GM12878 (cell line): ENCODE measurements at regions of chr22 and their contacts with region 1.

Region 1: GRCh38 chr22:19178656-19179496 is at the start of gene SLC25A1:
- DNase-seq: peak; percentile 39
- ATAC-seq: peak; percentile 88
- H3K4me3 ChIP-seq: peak within 1 kb of the TSS; percentile 76
- H3K27ac ChIP-seq: peak within 1 kb of the TSS; percentile 74
- H3K4me1 ChIP-seq: peaks cover 22% of the 10 kb centered on the region
- H3K27me3 ChIP-seq: peaks cover 0 to 1% of the 10 kb centered on the region in 2 experiments; a peak in 1 of 4 replicates
- CTCF ChIP-seq: no peak
- EP300 ChIP-seq: no peak
- POLR2A ChIP-seq: peak; percentile 59
- RAD21 ChIP-seq: no peak
- polyA plus RNA-seq, gene SLC25A1: 2.3 to 7.8 TPM

Region 2: GRCh38 chr22:18929459-18929858 is 249.4 kb before region 1 on chr22:
- CTCF ChIA-PET with region 1: no interaction called
- POLR2A ChIA-PET with region 1: no interaction called
- RAD21 ChIA-PET with region 1: no interaction called
- SMC1A ChIA-PET with region 1: no interaction called
- in situ Hi-C with region 1: no loop called
- intact Hi-C with region 1: no loop called
- DNase-seq: no peak
- ATAC-seq: no peak
- H3K4me3 ChIP-seq: no peak overlapping the region
- H3K27ac ChIP-seq: no peak overlapping the region
- H3K4me1 ChIP-seq: no peaks in the 10 kb centered on the region
- H3K27me3 ChIP-seq: no peaks in the 10 kb centered on the region
- CTCF ChIP-seq: no peak
- EP300 ChIP-seq: no peak
- POLR2A ChIP-seq: no peak
- RAD21 ChIP-seq: no peak

Region 3: GRCh38 chr22:19143967-19144400 is 34.9 kb before region 1 on chr22:
- CTCF ChIA-PET with region 1: interaction called, 24 read pairs
- POLR2A ChIA-PET with region 1: interaction called, 3 read pairs
- RAD21 ChIA-PET with region 1: interaction called, 6 read pairs
- SMC1A ChIA-PET with region 1: interaction called, 14 read pairs
- in situ Hi-C with region 1: no loop called
- intact Hi-C with region 1: loop called (anchors 2 kb)
- DNase-seq: no peak
- ATAC-seq: peak; percentile 63
- H3K4me3 ChIP-seq: peak overlapping the region; percentile 100
- H3K27ac ChIP-seq: peak overlapping the region; percentile 72
- H3K4me1 ChIP-seq: peaks cover 4% of the 10 kb centered on the region
- H3K27me3 ChIP-seq: peaks cover 0 to 8% of the 10 kb centered on the region in 2 experiments; a peak in 3 of 4 replicates
- CTCF ChIP-seq: no peak
- EP300 ChIP-seq: no peak
- POLR2A ChIP-seq: no peak
- RAD21 ChIP-seq: no peak

Region 4: DNA sequence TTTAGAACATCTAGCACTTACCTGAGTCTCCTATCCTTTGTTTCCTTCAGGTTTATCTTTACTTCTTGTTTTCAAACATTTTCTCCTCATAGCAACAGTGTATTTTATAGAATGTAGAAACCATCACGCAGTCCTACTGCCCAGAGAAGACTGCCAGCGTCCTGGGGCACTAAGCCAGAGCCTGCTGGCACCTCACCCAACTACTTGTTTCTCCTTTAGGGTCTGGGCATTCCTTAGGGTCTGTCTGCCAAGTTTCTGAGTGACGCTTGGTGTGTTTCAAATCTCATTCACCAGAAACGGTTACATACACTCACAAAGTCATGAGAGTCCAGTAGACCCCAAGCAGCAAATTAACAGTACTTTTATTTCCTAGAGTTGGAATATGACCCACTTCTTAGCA is 49.3 kb after region 1 on chr22:
- CTCF ChIA-PET with region 1: no interaction called
- POLR2A ChIA-PET with region 1: no interaction called
- RAD21 ChIA-PET with region 1: no interaction called
- SMC1A ChIA-PET with region 1: no interaction called
- in situ Hi-C with region 1: no loop called
- intact Hi-C with region 1: no loop called
- DNase-seq: no peak
- ATAC-seq: no peak
- H3K4me3 ChIP-seq: no peak overlapping the region
- H3K27ac ChIP-seq: no peak overlapping the region
- H3K4me1 ChIP-seq: no peaks in the 10 kb centered on the region
- H3K27me3 ChIP-seq: peaks cover 1 to 2% of the 10 kb centered on the region in 2 experiments; a peak in 2 of 4 replicates
- CTCF ChIP-seq: no peak
- EP300 ChIP-seq: no peak
- POLR2A ChIP-seq: no peak
- RAD21 ChIP-seq: no peak

Region 5: GRCh38 chr22:19321757-19322156 is 142.9 kb after region 1 on chr22:
- CTCF ChIA-PET with region 1: no interaction called
- POLR2A ChIA-PET with region 1: no interaction called
- RAD21 ChIA-PET with region 1: no interaction called
- SMC1A ChIA-PET with region 1: no interaction called
- in situ Hi-C with region 1: no loop called
- intact Hi-C with region 1: no loop called
- DNase-seq: no peak
- ATAC-seq: no peak
- H3K4me3 ChIP-seq: no peak overlapping the region
- H3K27ac ChIP-seq: no peak overlapping the region
- H3K4me1 ChIP-seq: no peaks in the 10 kb centered on the region
- H3K27me3 ChIP-seq: no peaks in the 10 kb centered on the region
- CTCF ChIP-seq: no peak
- EP300 ChIP-seq: no peak
- POLR2A ChIP-seq: no peak
- RAD21 ChIP-seq: no peak

Region 6: DNA sequence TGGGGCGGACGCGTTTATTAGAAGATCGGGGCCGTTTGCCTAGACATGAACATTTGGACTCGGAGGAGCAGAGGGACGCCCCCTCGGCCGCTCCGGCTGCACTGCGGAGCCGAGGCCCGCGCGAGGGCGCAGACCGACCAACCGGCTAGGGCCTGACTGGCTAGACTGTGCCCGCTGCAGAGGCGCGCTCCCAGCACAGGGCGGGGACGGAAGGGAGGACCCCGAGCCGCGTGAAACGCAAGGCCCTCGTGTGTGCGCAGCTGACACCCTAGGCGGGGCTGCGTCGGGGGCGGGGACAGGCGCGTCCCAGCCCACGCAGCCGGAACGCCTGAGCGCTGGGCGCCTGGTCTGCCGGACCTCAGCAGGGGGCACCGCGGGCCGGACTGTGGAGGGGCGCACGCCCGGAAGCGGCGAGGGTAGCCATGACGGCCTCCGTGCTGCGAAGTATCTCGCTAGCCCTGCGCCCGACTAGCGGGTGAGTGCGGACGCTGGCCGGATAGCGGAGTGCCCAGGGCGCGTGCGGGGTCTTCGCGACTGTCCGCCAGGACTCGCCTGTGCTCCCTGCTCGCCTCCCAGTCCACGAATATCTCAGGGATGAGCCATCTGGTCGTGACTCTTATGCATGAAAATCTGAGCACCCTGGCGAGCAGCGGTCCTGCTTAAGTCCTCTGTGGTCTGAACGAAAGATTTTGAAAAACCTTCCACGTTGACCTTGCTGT is 253.4 kb after region 1 on chr22 and contains the start of gene MRPL40:
- CTCF ChIA-PET with region 1: no interaction called
- POLR2A ChIA-PET with region 1: no interaction called
- RAD21 ChIA-PET with region 1: interaction called, 4 read pairs
- SMC1A ChIA-PET with region 1: no interaction called
- in situ Hi-C with region 1: no loop called
- intact Hi-C with region 1: loop called (anchors 5 kb)
- DNase-seq: peak; percentile 76
- ATAC-seq: peak; percentile 93
- H3K4me3 ChIP-seq: peak within 1 kb of the TSS; percentile 94
- H3K27ac ChIP-seq: peak within 1 kb of the TSS; percentile 93
- H3K4me1 ChIP-seq: no peaks in the 10 kb centered on the region
- H3K27me3 ChIP-seq: no peaks in the 10 kb centered on the region
- CTCF ChIP-seq: 0 out of 6 replicates have a peak, but pooled peaks of 1 of the 3 experiments have one; percentile 4
- EP300 ChIP-seq: peak in 1 of 2 experiments; percentile 16; a peak in 2 of 4 replicates
- POLR2A ChIP-seq: peak; percentile 93
- RAD21 ChIP-seq: no peak
- polyA plus RNA-seq, gene MRPL40: 180 to 207 TPM

Region 7: GRCh38 chr22:19473578-19473977 is 294.7 kb after region 1 on chr22:
- CTCF ChIA-PET with region 1: interaction called, 36 read pairs
- POLR2A ChIA-PET with region 1: interaction called, 3 read pairs
- RAD21 ChIA-PET with region 1: interaction called, 21 read pairs
- SMC1A ChIA-PET with region 1: interaction called, 19 read pairs
- in situ Hi-C with region 1: no loop called
- intact Hi-C with region 1: no loop called
- DNase-seq: no peak
- ATAC-seq: peak; percentile 28; the same call in 2 of the 3 replicates
- H3K4me3 ChIP-seq: no peak overlapping the region
- H3K27ac ChIP-seq: no peak overlapping the region
- H3K4me1 ChIP-seq: no peaks in the 10 kb centered on the region
- H3K27me3 ChIP-seq: no peaks in the 10 kb centered on the region
- CTCF ChIP-seq: peak in 1 of 3 experiments; percentile 5; a peak in 2 of 6 replicates
- EP300 ChIP-seq: no peak
- POLR2A ChIP-seq: no peak
- RAD21 ChIP-seq: no peak

Region 8: DNA sequence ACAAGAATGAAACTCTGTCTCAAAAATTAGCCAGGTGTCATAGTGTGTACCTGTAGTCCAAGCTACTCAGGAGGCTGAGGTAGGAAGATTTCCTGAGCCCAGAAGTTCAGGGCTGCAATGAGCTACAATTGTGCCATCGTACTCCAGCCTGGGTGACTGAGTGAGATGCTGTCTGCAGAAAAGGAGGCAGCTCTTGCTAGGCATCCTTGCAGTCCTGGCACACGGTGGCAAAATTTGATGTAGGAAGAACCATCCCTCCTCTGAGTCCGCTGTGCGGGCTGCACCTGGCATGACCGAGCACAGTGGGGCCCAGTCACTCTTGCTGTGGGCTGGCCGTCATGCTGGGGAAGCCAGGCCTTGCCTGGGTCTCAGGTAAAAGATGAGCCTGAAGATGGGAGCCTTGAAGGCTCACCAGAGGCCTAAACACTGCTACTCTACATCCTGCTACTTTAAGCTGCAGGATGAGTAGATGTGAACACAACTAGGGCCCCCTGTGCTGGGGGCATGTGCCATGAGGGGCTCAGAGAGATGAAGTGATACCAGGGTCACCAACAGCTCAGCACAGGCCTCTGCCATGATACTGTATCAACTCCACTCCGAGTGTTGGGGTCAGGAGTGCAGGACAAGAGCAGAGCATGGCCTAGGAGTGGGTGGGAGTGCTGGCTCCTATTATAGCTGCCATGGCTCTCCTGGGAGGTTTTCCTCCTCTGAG is 319.4 kb after region 1 on chr22:
- CTCF ChIA-PET with region 1: no interaction called
- POLR2A ChIA-PET with region 1: no interaction called
- RAD21 ChIA-PET with region 1: no interaction called
- SMC1A ChIA-PET with region 1: no interaction called
- in situ Hi-C with region 1: no loop called
- intact Hi-C with region 1: no loop called
- DNase-seq: no peak
- ATAC-seq: no peak
- H3K4me3 ChIP-seq: no peak overlapping the region
- H3K27ac ChIP-seq: no peak overlapping the region
- H3K4me1 ChIP-seq: no peaks in the 10 kb centered on the region
- H3K27me3 ChIP-seq: no peaks in the 10 kb centered on the region
- CTCF ChIP-seq: no peak
- EP300 ChIP-seq: no peak
- POLR2A ChIP-seq: no peak
- RAD21 ChIP-seq: no peak

Region 9: DNA sequence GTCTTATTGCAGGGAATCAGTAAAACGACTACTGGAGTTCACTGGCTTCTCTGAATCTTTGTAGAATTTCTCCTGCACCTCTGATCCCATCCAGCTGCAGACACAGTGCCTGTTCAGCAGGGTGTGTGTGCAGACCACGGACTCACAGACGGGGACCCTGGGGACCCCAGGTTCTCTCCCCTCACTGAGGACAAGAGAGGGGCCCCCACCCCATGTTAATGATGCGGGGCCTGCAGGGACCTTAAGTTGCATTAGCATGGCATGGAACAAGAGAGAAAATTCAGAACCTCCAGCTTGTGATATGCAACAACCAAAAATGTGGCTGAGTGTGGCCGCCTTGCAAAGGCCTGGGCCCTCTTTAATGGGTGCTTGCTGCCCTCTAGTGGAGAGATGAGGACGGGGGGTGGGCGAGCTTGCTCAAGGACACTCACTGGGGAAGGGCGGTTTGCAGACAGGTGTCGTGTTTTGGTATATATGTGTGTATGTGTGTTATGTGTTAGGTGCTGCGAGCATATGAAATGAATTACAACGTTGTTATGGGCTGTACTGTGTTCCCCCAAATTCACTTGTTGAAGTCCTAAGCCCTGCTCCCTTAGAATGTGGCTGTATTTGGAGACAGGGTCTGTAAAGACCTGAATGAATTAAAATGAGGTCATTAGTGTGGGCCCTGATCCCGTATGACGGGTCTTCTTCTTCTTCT is 451.0 kb after region 1 on chr22:
- CTCF ChIA-PET with region 1: interaction called, 8 read pairs
- POLR2A ChIA-PET with region 1: no interaction called
- RAD21 ChIA-PET with region 1: interaction called, 5 read pairs
- SMC1A ChIA-PET with region 1: interaction called, 3 read pairs
- in situ Hi-C with region 1: no loop called
- intact Hi-C with region 1: loop called (anchors 2 kb)
- DNase-seq: no peak
- ATAC-seq: peak; percentile 98
- H3K4me3 ChIP-seq: no peak overlapping the region
- H3K27ac ChIP-seq: no peak overlapping the region
- H3K4me1 ChIP-seq: no peaks in the 10 kb centered on the region
- H3K27me3 ChIP-seq: 0 out of 4 replicates have a peak, but pooled peaks cover 0 to 2% of the 10 kb centered on the region in 2 experiments
- CTCF ChIP-seq: peak; percentile 89 to 98 (median 92)
- EP300 ChIP-seq: no peak
- POLR2A ChIP-seq: no peak
- RAD21 ChIP-seq: peak; percentile 94